ENCODE measurements at regions of chr7 and their contacts with region 1.

Region 1: DNA sequence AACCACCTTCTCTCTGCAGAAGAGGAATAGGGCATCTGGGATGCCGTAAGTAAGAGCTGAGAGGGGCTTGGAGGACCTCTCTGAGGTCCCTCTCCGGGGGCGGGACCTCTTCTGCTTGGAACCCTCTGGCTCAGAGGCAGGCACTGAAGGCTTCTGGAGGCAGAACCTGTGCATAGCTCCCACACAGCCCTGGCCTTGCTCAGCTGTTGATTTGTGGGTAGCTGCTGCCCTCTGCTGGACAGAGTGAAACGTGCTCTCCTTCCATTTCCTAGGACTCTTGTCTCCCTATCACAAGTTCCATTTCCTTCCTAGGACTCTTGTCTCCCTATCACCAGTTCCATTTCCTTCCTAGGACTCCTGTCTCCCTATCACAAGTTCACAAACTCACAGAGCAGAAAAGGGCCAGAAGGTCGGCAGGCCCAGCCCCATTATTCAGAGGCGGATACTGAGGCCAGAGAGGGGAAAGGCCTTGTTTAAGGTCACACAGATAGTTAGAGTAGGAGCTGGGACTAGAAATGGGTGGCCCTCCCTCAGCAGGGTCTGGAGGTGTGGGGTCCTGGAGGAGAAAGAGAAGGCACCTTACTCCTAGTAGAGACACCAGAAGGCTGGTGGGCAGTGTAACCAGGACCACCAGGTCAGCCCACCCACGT is 30.3 kb upstream of the GARS1 start:
- DNase-seq: peak; percentile 73
- H3K4me3 ChIP-seq: no peak overlapping the region
- H3K27ac ChIP-seq: no peak overlapping the region
- H3K4me1 ChIP-seq: peaks cover 15% of the 10 kb centered on the region
- H3K27me3 ChIP-seq: no peaks in the 10 kb centered on the region
- CTCF ChIP-seq: peak; percentile 88

Region 2: DNA sequence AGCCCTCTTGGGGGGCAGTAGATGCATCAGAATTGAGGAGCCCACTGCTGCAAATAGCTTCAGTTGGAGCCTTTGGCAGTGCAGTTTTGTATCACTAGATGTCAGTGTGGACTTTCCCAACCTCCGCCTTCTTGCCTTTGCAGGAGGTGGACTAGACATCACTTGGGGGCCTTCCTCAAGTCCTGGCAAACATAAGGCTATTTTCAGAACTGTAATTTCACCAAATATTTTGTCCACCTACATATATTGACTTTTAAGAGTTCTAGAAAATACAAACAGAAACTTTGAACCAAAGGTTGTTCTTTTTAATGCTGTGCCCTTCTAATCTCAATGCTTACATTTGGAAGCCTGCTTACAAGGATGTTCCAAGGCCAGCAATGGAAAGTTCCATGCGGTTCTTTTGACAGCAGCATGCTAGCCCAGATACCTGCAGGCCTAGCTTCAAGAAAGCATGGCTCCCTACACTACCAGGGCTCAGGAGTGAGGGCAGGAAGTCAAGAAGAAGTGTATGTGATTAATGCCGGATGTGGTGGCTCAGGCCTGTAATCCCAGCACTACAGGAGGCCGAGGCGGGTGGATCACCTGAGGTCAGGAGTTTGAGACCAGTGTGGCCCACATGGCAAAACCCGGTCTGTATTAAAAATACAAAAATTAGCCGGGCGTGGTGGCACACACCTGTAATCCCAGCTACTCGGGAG is 288.0 kb before region 1 on chr7:
- intact Hi-C with region 1: loop called (anchors 10 kb)
- DNase-seq: no peak
- H3K4me3 ChIP-seq: no peak overlapping the region
- H3K27ac ChIP-seq: no peak overlapping the region
- H3K4me1 ChIP-seq: no peaks in the 10 kb centered on the region
- H3K27me3 ChIP-seq: no peaks in the 10 kb centered on the region
- CTCF ChIP-seq: peak; percentile 82

Region 3: DNA sequence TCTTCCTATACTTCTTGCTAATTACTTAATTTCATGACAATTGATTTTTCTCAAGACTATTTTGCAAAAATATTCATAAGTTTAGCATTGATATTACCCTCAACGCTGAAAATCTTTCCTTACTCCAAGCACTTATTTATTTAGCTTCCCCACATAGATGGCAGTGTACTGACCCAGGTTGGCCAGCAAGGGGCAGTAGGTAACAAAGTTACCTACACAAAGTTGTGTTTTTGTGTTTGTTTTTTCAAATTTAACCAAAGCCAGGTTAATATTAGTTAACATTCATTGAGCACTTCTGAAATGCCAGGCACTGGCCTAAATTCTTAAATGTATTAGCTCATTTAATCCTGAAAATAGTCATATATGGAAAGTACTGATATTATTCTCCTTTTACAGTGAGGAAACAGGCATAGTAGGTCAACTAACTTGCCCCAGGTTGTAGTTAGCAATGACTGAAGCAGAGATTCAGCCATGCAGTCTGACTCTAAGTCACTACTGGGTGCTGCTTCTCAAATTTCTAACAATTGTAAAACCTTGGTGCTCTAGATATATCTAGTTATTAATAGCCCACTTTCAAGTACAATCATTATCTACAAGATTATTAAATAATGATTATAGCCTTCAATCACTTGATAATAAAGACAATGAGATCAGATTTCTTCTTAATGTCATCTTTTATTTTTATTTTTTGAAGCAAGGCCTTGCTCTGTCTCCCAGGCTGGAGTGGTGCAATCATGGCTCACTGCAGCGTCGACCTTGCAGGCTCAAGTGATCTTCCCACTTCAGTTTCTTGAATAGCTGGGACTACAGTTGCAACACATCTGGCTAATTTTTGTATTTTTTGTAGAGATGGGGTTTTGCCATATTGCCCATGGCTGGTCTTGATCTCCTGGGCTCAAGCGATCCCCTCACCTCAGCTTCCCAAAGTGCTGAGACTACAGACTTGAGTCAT is 54.0 kb before region 1 on chr7:
- intact Hi-C with region 1: loop called (anchors 10 kb)
- DNase-seq: no peak
- H3K4me3 ChIP-seq: no peak overlapping the region
- H3K27ac ChIP-seq: no peak overlapping the region
- H3K4me1 ChIP-seq: peaks cover 2% of the 10 kb centered on the region
- H3K27me3 ChIP-seq: no peaks in the 10 kb centered on the region
- CTCF ChIP-seq: peak; percentile 85

Measured in left ventricle myocardium inferior (tissue), 1 donor.